CD4-positive, alpha-beta memory T cell (primary cell): ENCODE measurements at regions of chr2 and their contacts with region 1.

Region 1: DNA sequence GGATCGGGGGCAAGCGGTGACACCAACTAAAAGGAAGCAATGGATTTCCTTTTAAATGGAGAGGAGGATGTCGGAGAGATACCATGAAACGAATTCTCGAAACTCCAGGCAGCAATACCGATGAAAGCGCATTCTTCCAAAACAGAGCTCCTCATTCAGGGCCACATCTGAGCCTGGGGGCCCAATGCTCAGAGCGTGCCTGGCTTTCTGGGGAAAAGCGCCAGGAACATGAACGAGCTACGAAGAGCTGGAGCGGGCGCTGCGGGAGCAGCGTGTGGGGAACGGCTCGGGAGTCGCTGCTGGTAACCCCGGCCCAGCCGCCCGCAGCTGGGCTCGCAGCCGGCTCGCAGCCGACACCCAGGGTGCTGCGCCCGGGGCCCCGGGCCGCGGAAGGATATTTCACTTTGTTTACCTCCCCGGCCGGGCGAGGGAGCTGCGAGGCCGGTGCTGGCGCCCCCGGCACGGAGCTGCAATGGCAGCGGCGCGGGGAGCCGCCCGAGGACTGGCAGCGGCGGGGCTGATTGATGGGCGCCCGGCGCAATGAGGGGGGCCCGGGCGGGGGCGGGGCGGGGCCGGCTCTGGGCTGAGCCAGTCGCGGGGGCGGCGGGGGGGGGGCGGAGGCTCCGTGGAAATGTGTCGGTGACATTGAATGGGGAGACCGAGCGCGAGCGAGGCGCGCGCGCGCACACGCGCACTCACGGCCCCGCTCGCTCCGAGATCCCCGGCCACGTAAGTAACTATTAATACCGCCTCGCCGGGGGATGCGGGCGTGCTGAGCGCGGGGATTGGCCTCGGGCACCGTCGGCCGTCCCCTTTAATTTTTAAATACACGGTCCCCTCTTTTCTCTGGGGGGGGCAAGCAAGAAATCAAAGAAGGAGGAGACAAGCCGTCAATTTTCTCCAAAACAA is at the start of gene TRIB2:
- DNase-seq: peak; percentile 87 to 92 (median 89)
- H3K4me3 ChIP-seq: peak within 1 kb of the TSS; percentile 78 to 96
- H3K4me3 Mint-ChIP-seq: peak within 1 kb of the TSS; percentile 98 to 100 (median 99)
- H3K27ac ChIP-seq: peak within 1 kb of the TSS; percentile 84
- H3K27ac Mint-ChIP-seq: peak within 1 kb of the TSS; percentile 93 to 99 (median 96)
- H3K4me1 ChIP-seq: peaks cover 39% of the 10 kb centered on the region
- H3K4me1 Mint-ChIP-seq: peaks cover 28 to 83% (median 43%) of the 10 kb centered on the region in 4 donors
- H3K27me3 ChIP-seq: no peaks in the 10 kb centered on the region
- H3K27me3 Mint-ChIP-seq: peaks cover 0 to 2% of the 10 kb centered on the region in 2 donors
- total RNA-seq, gene TRIB2: 123 to 126 TPM

Region 2: GRCh38 chr2:11753886-11754699 is 962.4 kb before region 1 on chr2:
- CTCF ChIA-PET with region 1: no interaction called
- POLR2A ChIA-PET with region 1: interaction called, 6 read pairs
- intact Hi-C with region 1: loop called (anchors 5 kb)
- DNase-seq: peak; percentile 39 to 88 (median 44)
- H3K4me3 ChIP-seq: peak overlapping the region; percentile 19 to 43
- H3K4me3 Mint-ChIP-seq: peak overlapping the region; percentile 78 to 92 (median 84)
- H3K27ac ChIP-seq: peak overlapping the region; percentile 70
- H3K27ac Mint-ChIP-seq: peak overlapping the region; percentile 91 to 98 (median 95)
- H3K4me1 ChIP-seq: peaks cover 95% of the 10 kb centered on the region
- H3K4me1 Mint-ChIP-seq: peaks cover 60 to 93% (median 78%) of the 10 kb centered on the region in 4 donors
- H3K27me3 ChIP-seq: no peaks in the 10 kb centered on the region
- H3K27me3 Mint-ChIP-seq: no peaks in the 10 kb centered on the region

Region 3: GRCh38 chr2:12127638-12128037 is 588.9 kb before region 1 on chr2:
- CTCF ChIA-PET with region 1: interaction called, 9 read pairs
- POLR2A ChIA-PET with region 1: interaction called, 11 read pairs
- intact Hi-C with region 1: loop called (anchors 2 kb)
- DNase-seq: peak in 4 of 5 donors; percentile 32 to 43 (median 38)
- H3K4me3 ChIP-seq: peak overlapping the region; percentile 0 to 10
- H3K4me3 Mint-ChIP-seq: peak overlapping the region in 4 of 8 donors; percentile 62 to 88 (median 81)
- H3K27ac ChIP-seq: peak overlapping the region; percentile 50
- H3K27ac Mint-ChIP-seq: peak overlapping the region; percentile 68 to 92 (median 76)
- H3K4me1 ChIP-seq: peaks cover 45% of the 10 kb centered on the region
- H3K4me1 Mint-ChIP-seq: peaks cover 0 to 15% (median 10%) of the 10 kb centered on the region in 4 donors
- H3K27me3 ChIP-seq: no peaks in the 10 kb centered on the region
- H3K27me3 Mint-ChIP-seq: no peaks in the 10 kb centered on the region

Region 4: GRCh38 chr2:12430407-12431133 is 286.0 kb before region 1 on chr2:
- CTCF ChIA-PET with region 1: interaction called, 64 read pairs
- POLR2A ChIA-PET with region 1: interaction called, 36 read pairs
- intact Hi-C with region 1: loop called (anchors 5 kb)
- DNase-seq: peak in 3 of 5 donors; percentile 9 to 26 (median 21)
- H3K4me3 ChIP-seq: peak overlapping the region in 1 of 2 donors; percentile 27
- H3K4me3 Mint-ChIP-seq: peak overlapping the region; percentile 50 to 83 (median 78)
- H3K27ac ChIP-seq: no peak overlapping the region
- H3K27ac Mint-ChIP-seq: peak overlapping the region; percentile 59 to 93 (median 88)
- H3K4me1 ChIP-seq: peaks cover 28% of the 10 kb centered on the region
- H3K4me1 Mint-ChIP-seq: peaks cover 19 to 44% (median 29%) of the 10 kb centered on the region in 4 donors
- H3K27me3 ChIP-seq: no peaks in the 10 kb centered on the region
- H3K27me3 Mint-ChIP-seq: no peaks in the 10 kb centered on the region

Region 5: DNA sequence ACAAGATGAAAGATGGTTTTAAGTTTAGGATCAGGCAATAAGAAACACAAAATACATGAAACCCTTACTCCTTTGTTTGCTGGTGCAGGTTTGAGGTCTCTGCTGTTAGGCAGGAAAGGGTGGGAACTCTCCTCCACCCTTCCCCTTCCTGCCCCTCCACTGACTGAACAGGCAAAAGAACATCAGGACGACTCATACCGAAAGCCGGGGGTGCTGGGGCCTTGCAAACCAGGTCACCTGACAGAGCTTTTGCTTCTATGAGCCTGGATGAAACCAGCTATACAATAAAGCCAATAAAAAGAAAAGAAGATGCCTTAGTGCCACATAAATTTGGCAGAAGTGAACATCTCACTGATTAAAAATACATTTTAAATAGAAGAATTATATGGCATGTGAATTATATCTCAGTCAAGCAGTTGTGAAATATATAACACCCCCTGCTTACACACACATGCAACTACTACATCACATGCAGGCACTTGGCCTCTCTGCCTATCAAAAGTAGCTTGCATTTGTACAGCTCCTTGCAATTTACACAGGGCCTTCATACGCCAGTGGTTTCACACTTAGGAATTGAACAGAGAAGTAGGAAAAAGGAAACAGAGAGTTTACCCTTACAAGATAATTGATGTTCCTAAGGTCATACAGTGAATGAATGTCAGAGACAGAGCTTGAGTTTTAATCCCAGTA is 214.9 kb before region 1 on chr2:
- CTCF ChIA-PET with region 1: interaction called, 31 read pairs
- POLR2A ChIA-PET with region 1: interaction called, 101 read pairs
- intact Hi-C with region 1: loop called (anchors 2 kb)
- DNase-seq: peak; percentile 68 to 73 (median 70)
- H3K4me3 ChIP-seq: no peak overlapping the region
- H3K4me3 Mint-ChIP-seq: peak overlapping the region; percentile 12 to 89 (median 74)
- H3K27ac ChIP-seq: peak overlapping the region; percentile 56
- H3K27ac Mint-ChIP-seq: peak overlapping the region; percentile 83 to 98 (median 88)
- H3K4me1 ChIP-seq: peaks cover 98% of the 10 kb centered on the region
- H3K4me1 Mint-ChIP-seq: peaks cover 81 to 100% (median 92%) of the 10 kb centered on the region in 4 donors
- H3K27me3 ChIP-seq: no peaks in the 10 kb centered on the region
- H3K27me3 Mint-ChIP-seq: no peaks in the 10 kb centered on the region

Region 6: GRCh38 chr2:12606472-12607000 is 110.0 kb before region 1 on chr2:
- CTCF ChIA-PET with region 1: interaction called, 16 read pairs
- POLR2A ChIA-PET with region 1: interaction called, 9 read pairs
- intact Hi-C with region 1: loop called (anchors 1 kb)
- DNase-seq: peak in 4 of 5 donors; percentile 16 to 21 (median 16)
- H3K4me3 ChIP-seq: no peak overlapping the region
- H3K4me3 Mint-ChIP-seq: peak overlapping the region in 1 of 8 donors; percentile 15
- H3K27ac ChIP-seq: no peak overlapping the region
- H3K27ac Mint-ChIP-seq: no peak overlapping the region
- H3K4me1 ChIP-seq: peaks cover 16% of the 10 kb centered on the region
- H3K4me1 Mint-ChIP-seq: peaks cover 15 to 26% (median 21%) of the 10 kb centered on the region in 4 donors
- H3K27me3 ChIP-seq: no peaks in the 10 kb centered on the region
- H3K27me3 Mint-ChIP-seq: no peaks in the 10 kb centered on the region

Region 7: GRCh38 chr2:12931186-12931844 is 214.8 kb after region 1 on chr2:
- CTCF ChIA-PET with region 1: interaction called, 237 read pairs
- POLR2A ChIA-PET with region 1: interaction called, 72 read pairs
- intact Hi-C with region 1: loop called (anchors 1 kb)
- DNase-seq: peak in 4 of 5 donors; percentile 13 to 25 (median 22)
- H3K4me3 ChIP-seq: no peak overlapping the region
- H3K4me3 Mint-ChIP-seq: no peak overlapping the region
- H3K27ac ChIP-seq: no peak overlapping the region
- H3K27ac Mint-ChIP-seq: no peak overlapping the region
- H3K4me1 ChIP-seq: peaks cover 15% of the 10 kb centered on the region
- H3K4me1 Mint-ChIP-seq: peaks cover 11 to 23% (median 17%) of the 10 kb centered on the region in 4 donors
- H3K27me3 ChIP-seq: no peaks in the 10 kb centered on the region
- H3K27me3 Mint-ChIP-seq: no peaks in the 10 kb centered on the region

Region 8: DNA sequence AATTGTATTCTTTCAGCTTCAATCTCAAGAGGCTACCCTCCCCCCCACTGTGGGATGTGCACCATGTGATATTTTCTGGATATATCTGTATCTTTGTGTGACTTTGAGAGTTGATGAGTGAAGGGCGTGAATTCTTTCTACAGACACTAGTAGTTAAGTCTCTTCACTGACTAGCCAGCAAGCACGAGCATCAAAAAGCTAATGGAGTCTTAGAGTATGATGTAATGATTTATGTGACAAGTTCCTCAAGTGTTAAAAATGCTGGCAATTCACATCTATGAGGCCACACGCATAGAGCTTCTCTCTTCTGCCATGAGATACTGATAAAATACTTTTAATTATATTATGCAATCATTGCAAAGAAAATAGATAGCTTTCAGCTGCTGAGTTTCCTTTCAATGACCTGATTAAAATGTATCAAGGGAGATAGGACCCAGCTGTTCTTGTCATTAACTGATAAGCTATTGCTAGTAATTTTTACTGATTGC is 305.0 kb after region 1 on chr2:
- CTCF ChIA-PET with region 1: no interaction called
- POLR2A ChIA-PET with region 1: no interaction called
- intact Hi-C with region 1: no loop called
- DNase-seq: no peak
- H3K4me3 ChIP-seq: no peak overlapping the region
- H3K4me3 Mint-ChIP-seq: no peak overlapping the region
- H3K27ac ChIP-seq: no peak overlapping the region
- H3K27ac Mint-ChIP-seq: no peak overlapping the region
- H3K4me1 ChIP-seq: no peaks in the 10 kb centered on the region
- H3K4me1 Mint-ChIP-seq: no peaks in the 10 kb centered on the region
- H3K27me3 ChIP-seq: no peaks in the 10 kb centered on the region
- H3K27me3 Mint-ChIP-seq: peaks cover 8 to 28% of the 10 kb centered on the region in 2 donors

Region 9: GRCh38 chr2:13401312-13401711 is 684.8 kb after region 1 on chr2:
- CTCF ChIA-PET with region 1: no interaction called
- POLR2A ChIA-PET with region 1: no interaction called
- intact Hi-C with region 1: no loop called
- DNase-seq: no peak
- H3K4me3 ChIP-seq: no peak overlapping the region
- H3K4me3 Mint-ChIP-seq: no peak overlapping the region
- H3K27ac ChIP-seq: no peak overlapping the region
- H3K27ac Mint-ChIP-seq: no peak overlapping the region
- H3K4me1 ChIP-seq: no peaks in the 10 kb centered on the region
- H3K4me1 Mint-ChIP-seq: no peaks in the 10 kb centered on the region
- H3K27me3 ChIP-seq: no peaks in the 10 kb centered on the region
- H3K27me3 Mint-ChIP-seq: no peaks in the 10 kb centered on the region